Caki2 (cell line): ENCODE measurements at regions of chr6 and their contacts with region 1.

Region 1: GRCh38 chr6:57316581-57317059 is 810 bp upstream of the PRIM2 start:
- DNase-seq: peak; percentile 91

Region 2: DNA sequence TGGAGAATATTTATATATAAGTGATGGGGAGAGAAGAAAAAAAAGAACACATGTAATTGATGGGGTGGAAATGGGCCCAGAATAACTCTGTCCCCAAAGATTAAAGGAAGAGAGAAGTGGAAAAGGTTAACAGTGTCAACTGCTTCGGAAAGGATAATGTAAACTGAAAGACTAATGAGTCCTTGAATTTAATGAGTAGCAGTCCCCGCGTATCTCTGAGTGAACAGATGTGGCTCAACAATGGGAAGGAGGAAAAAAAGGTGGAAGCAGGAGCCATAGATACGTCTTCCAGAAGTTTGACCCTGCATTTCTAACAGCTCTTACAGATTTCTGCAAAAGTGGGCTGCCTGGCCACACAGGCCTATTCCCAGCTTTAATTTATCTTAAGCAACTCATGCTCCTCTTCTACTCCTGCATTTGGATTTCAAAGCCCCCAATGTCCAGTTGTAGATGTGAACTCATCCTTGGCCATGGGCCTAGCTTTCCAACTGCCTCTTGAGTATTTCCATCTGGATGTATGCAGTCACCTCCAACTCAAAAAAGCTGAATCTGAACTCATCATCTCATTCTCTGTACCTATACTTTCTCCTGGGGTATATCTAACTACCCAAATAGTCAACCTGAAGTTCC is 735.2 kb before region 1 on chr6:
- in situ Hi-C with region 1: no loop called
- DNase-seq: no peak

Region 3: GRCh38 chr6:56938649-56939191 is 377.9 kb before region 1 on chr6:
- in situ Hi-C with region 1: loop called (anchors 25 kb)
- DNase-seq: peak; percentile 98

Region 4: GRCh38 chr6:56962451-56962850 is 354.2 kb before region 1 on chr6:
- in situ Hi-C with region 1: no loop called
- DNase-seq: no peak

Region 5: GRCh38 chr6:57064809-57065208 is 251.8 kb before region 1 on chr6:
- in situ Hi-C with region 1: loop called (anchors 25 kb)
- DNase-seq: no peak

Region 6: GRCh38 chr6:57267586-57268293 is 48.9 kb before region 1 on chr6:
- in situ Hi-C with region 1: no loop called
- DNase-seq: peak; percentile 77